ENCODE measurements at regions of chr5 and their contacts with region 1.

Region 1: GRCh38 chr5:54959673-54960418 is 25.5 kb downstream of the ESM1 start:
- DNase-seq: no peak
- H3K4me3 ChIP-seq: no peak overlapping the region
- H3K27ac ChIP-seq: no peak overlapping the region
- H3K4me1 ChIP-seq: no peaks in the 10 kb centered on the region
- H3K27me3 ChIP-seq: no peaks in the 10 kb centered on the region
- CTCF ChIP-seq: no peak
- POLR2A ChIP-seq: no peak

Region 2: GRCh38 chr5:54895816-54896341 is 64.0 kb before region 1 on chr5:
- intact Hi-C with region 1: loop called (anchors 2 kb)
- DNase-seq: peak in 1 of 2 donors; percentile 25
- H3K4me3 ChIP-seq: no peak overlapping the region
- H3K27ac ChIP-seq: no peak overlapping the region
- H3K4me1 ChIP-seq: no peaks in the 10 kb centered on the region
- H3K27me3 ChIP-seq: no peaks in the 10 kb centered on the region
- CTCF ChIP-seq: peak in 2 of 3 donors; percentile 40 to 57
- POLR2A ChIP-seq: no peak

Region 3: DNA sequence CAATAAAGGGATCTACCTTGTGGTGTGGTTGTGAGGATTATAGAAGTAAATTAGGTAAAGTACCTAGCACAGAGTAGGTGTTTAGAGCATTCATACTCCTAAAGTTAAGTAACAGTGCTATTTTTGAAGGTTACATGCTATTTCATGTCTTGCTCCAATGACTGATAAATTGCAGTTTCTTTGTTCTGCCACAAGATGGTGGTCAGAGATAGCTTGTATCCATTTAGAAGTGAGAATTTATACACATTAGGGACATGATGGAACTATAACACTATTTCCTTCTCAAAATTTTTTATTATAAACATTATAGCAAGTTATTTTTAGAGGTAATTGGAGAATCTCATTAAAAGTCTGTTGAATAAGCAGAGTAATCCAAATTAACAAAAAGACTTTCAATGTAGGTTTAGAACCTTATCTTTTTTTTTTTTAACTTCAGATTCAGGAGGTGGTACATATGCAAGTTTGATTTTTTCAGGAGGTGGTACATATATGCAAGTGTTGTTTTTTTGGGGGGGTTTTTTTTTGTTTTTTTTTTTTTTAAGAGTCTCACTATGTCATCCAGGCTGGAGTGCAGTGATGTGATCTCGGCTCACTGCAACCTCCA is 365.1 kb after region 1 on chr5:
- intact Hi-C with region 1: no loop called
- DNase-seq: no peak
- H3K4me3 ChIP-seq: no peak overlapping the region
- H3K27ac ChIP-seq: no peak overlapping the region
- H3K4me1 ChIP-seq: no peaks in the 10 kb centered on the region
- H3K27me3 ChIP-seq: no peaks in the 10 kb centered on the region
- CTCF ChIP-seq: peak; percentile 32 to 62 (median 47)
- POLR2A ChIP-seq: no peak